CD4-positive, alpha-beta T cell (primary cell): ENCODE measurements at regions of chr1 and their contacts with region 1.

Region 1: DNA sequence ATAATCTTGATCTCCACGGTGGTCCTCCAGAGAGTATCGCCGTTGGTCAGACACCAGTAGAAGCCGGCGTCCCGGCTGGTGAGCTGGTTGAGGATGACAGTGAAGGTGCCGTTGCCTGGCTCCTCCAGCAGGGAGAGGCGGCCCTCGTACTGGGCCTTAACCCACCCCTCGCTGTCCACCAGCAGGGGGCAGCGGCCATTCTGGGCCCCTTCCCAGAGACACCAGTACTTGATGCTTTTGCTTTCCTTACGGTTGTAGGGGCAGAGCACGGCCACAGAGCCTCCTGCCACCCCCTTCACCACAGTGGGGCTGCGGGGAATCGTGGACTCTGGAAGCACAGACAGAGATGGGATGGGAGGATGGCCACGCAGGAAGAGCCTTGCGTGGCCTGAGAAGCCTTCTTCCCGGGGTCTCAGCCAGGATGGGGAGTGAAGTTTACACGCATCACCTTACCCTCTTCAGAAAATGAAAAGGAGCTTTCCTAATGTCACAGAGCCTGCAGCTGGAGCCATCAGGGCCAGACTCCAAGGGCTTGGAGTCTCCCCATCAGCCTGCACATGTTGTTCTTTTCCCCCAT is 10.7 kb downstream of the PIGR start:
- DNase-seq: peak in 8 of 14 experiments; percentile 20 to 71 (median 49)
- ATAC-seq: peak; percentile 55
- H3K4me3 ChIP-seq: no peak overlapping the region
- H3K4me3 Mint-ChIP-seq: no peak overlapping the region
- H3K27ac ChIP-seq: no peak overlapping the region
- H3K27ac Mint-ChIP-seq: no peak overlapping the region
- H3K4me1 ChIP-seq: peaks cover 24% of the 10 kb centered on the region
- H3K4me1 Mint-ChIP-seq: peaks cover 29% of the 10 kb centered on the region
- H3K27me3 ChIP-seq: no peaks in the 10 kb centered on the region
- H3K27me3 Mint-ChIP-seq: no peaks in the 10 kb centered on the region
- CTCF ChIP-seq: peak; percentile 60

Region 2: DNA sequence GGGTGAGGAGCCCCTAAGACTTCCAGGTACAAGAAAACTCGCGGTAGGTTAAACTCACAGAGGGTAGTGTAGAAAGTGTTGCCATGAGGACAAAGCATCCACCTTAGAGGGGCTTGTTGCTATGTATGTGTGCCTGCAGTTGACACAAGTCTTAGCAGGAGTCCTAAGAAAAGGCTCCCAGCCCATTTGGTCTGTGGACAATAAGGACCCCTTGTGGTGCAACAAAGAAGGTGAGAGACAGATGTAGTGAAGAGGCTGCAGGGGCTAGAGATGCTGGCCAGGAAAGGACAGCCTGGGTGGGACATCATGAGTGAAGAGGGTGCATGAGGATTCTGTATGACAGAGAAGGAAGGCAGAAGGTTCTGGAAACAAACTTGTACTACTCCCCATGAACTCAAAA is 127.0 kb before region 1 on chr1:
- CTCF ChIA-PET with region 1: no interaction called
- POLR2A ChIA-PET with region 1: interaction called, 3 read pairs
- intact Hi-C with region 1: loop called in 1 of 2 experiments (anchors 5 kb)
- DNase-seq: peak in 13 of 14 experiments; percentile 15 to 82 (median 41)
- ATAC-seq: peak; percentile 85
- H3K4me3 ChIP-seq: no peak overlapping the region
- H3K4me3 Mint-ChIP-seq: no peak overlapping the region
- H3K27ac ChIP-seq: no peak overlapping the region
- H3K27ac Mint-ChIP-seq: peak overlapping the region; percentile 28
- H3K4me1 ChIP-seq: peaks cover 34% of the 10 kb centered on the region
- H3K4me1 Mint-ChIP-seq: peaks cover 50% of the 10 kb centered on the region
- H3K27me3 ChIP-seq: no peaks in the 10 kb centered on the region
- H3K27me3 Mint-ChIP-seq: no peaks in the 10 kb centered on the region
- CTCF ChIP-seq: peak; percentile 40

Region 3: DNA sequence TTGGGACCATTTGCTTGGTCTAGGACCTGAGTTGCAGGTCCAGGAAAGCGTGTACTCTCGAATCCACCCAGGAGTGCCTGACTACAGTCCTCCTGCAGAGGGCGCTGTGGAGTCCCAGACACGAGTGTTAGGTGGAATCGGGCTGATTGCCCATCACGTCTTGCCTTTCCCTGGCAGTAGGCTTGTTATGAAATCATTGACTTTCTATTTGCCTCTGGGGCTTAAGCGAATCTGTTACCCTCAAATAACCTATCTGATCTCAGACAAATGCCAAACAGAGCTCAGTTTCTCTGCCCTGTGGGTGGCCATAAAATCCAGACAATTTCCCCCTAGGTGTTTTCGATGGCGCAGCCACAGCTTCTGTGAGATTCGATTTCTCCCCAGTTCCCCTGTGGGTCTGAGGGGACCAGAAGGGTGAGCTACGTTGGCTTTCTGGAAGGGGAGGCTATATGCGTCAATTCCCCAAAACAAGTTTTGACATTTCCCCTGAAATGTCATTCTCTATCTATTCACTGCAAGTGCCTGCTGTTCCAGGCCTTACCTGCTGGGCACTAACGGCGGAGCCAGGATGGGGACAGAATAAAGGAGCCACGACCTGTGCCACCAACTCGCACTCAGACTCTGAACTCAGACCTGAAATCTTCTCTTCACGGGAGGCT is 70.4 kb before region 1 on chr1 and contains the start of gene IL20:
- CTCF ChIA-PET with region 1: interaction called, 5 read pairs
- POLR2A ChIA-PET with region 1: no interaction called
- intact Hi-C with region 1: loop called in 1 of 2 experiments (anchors 1 kb)
- DNase-seq: peak; percentile 79 to 93 (median 85)
- ATAC-seq: peak; percentile 98
- H3K4me3 ChIP-seq: no peak within 1 kb of the TSS
- H3K4me3 Mint-ChIP-seq: no peak within 1 kb of the TSS
- H3K27ac ChIP-seq: no peak within 1 kb of the TSS
- H3K27ac Mint-ChIP-seq: no peak within 1 kb of the TSS
- H3K4me1 ChIP-seq: peaks cover 5% of the 10 kb centered on the region
- H3K4me1 Mint-ChIP-seq: peaks cover 7% of the 10 kb centered on the region
- H3K27me3 ChIP-seq: peaks cover 0 to 2% of the 10 kb centered on the region in 2 experiments
- H3K27me3 Mint-ChIP-seq: peaks cover 12% of the 10 kb centered on the region
- CTCF ChIP-seq: peak; percentile 87
- total RNA-seq, gene IL20: not detected

Region 4: GRCh38 chr1:206905280-206906164 is 30.1 kb before region 1 on chr1:
- CTCF ChIA-PET with region 1: interaction called, 10 read pairs
- POLR2A ChIA-PET with region 1: interaction called, 20 read pairs
- intact Hi-C with region 1: no loop called
- DNase-seq: peak in 5 of 14 experiments; percentile 29 to 56 (median 40)
- ATAC-seq: peak; percentile 31
- H3K4me3 ChIP-seq: no peak overlapping the region
- H3K4me3 Mint-ChIP-seq: peak overlapping the region; percentile 70
- H3K27ac ChIP-seq: peak overlapping the region; percentile 29 to 42
- H3K27ac Mint-ChIP-seq: peak overlapping the region; percentile 90
- H3K4me1 ChIP-seq: peaks cover 68% of the 10 kb centered on the region
- H3K4me1 Mint-ChIP-seq: peaks cover 90% of the 10 kb centered on the region
- H3K27me3 ChIP-seq: no peaks in the 10 kb centered on the region
- H3K27me3 Mint-ChIP-seq: no peaks in the 10 kb centered on the region
- CTCF ChIP-seq: no peak

Region 5: DNA sequence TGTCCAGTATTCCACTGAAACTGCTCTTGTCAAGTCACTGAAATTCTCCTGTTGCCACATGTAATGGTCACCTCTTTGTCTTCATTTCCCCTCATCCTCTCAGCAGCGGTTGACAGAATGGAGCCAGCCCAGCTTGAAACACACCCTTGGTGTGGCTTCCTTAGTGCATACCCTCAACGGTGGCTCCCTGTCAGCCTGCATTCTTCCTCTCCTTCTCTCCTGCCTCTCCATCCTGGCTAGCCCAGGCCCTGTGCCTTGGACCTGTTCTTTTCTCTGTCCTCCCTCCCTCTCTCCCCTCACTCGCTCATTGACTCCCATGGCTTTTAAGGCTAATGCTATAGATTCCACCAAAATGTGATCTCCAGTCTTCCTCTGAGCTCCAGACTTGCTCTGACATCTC is 17.5 kb before region 1 on chr1:
- CTCF ChIA-PET with region 1: interaction called, 22 read pairs
- POLR2A ChIA-PET with region 1: interaction called, 73 read pairs
- intact Hi-C with region 1: loop called (anchors 2 kb)
- DNase-seq: peak in 1 of 14 experiments; percentile 27
- ATAC-seq: no peak
- H3K4me3 ChIP-seq: peak overlapping the region; percentile 80
- H3K4me3 Mint-ChIP-seq: no peak overlapping the region
- H3K27ac ChIP-seq: peak overlapping the region; percentile 28 to 95
- H3K27ac Mint-ChIP-seq: no peak overlapping the region
- H3K4me1 ChIP-seq: peaks cover 78% of the 10 kb centered on the region
- H3K4me1 Mint-ChIP-seq: peaks cover 67% of the 10 kb centered on the region
- H3K27me3 ChIP-seq: no peaks in the 10 kb centered on the region
- H3K27me3 Mint-ChIP-seq: no peaks in the 10 kb centered on the region
- CTCF ChIP-seq: no peak